Caco-2 (cell line): ENCODE measurements at regions of chr20 and their contacts with region 1.

Region 1: DNA sequence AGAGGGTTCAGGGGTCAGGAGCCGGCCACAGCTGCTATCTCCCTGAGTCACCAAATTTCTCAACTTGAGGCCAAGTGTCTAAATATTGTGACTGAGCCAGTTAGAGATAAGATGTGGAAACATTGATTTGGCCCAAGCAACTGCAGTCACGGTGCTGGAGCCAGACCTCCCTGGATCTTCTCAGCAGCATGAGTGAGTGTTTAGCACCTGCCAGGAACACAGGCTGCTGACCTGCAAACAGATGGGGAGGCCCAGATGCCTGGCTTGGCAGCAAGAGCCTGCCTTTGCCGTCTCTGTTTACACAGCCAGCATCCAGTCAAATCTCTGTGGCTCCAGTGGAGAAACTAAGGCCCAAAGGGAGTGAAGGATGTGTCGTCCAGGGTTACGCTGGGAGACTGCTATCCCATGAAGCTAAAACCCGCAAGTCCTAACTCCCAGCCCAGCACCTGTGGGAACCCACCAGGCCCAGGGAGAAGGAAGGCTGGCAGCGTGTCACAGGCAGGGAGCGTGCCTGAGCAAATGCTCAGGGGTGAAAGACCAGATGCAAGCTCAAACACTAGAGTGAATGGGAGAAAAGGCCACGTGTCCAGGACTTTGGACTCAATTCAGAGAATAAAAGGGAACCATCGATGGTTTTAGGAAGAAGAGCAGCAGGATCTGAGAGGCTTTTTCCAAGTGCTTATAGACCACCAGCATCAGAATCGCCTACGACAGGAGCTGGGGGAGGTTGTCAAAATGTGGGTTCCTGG is 15.9 kb upstream of the PTGIS start:
- DNase-seq: peak; percentile 97 to 99
- H3K4me3 ChIP-seq: no peak overlapping the region
- H3K4me3 Mint-ChIP-seq: peak overlapping the region; percentile 66
- H3K27ac Mint-ChIP-seq: peak overlapping the region; percentile 93
- H3K4me1 ChIP-seq: peaks cover 51% of the 10 kb centered on the region
- H3K4me1 Mint-ChIP-seq: peaks cover 29% of the 10 kb centered on the region
- H3K27me3 ChIP-seq: no peaks in the 10 kb centered on the region
- H3K27me3 Mint-ChIP-seq: no peaks in the 10 kb centered on the region
- CTCF ChIP-seq: peak; percentile 42 to 77

Region 2: DNA sequence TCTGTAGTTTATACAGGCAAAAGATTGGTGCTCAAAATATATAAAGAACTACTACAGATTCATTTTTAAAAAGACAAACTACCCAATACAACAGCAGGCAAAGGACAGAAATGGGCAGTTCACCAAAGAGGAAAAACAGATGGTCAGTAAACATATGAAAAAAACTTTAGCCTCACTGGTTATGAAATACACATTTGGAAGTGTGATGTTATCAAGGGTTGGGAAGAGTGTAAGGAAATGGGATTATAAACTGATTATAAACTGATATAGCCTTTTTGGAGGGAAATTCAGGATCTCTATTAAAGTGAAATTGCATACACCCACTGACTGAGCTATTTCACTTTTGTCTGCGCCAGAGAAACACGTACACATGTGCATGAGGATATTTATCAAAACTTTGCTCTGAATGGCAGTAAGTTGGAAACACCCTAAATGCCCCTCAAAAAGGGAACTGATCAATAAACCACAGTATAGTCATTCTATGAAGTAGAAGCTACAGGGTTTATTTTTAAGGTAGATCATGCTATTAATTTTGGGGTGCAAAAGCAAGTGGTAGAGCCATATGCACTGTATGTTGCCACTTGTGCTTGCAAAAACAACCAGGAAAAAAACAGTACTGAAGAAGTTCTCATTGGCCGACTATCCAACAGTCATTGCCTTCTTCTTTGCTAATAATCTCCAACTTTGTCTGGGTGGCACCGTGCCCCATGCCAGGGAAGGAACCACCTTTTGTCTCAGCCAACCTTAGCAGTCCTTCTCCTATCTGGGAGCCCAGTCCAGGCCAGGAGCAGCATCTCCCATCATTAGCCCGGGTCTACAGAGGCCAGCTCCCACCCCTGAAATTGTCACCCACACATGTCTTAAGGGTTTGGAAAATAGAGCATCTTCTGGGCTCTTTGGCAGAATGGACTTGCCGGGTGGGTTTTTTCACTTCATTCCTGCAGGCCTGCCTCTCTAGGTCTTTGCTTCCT is 694.4 kb before region 1 on chr20:
- CTCF ChIA-PET with region 1: no interaction called
- POLR2A ChIA-PET with region 1: no interaction called
- intact Hi-C with region 1: no loop called
- DNase-seq: no peak
- H3K4me3 ChIP-seq: no peak overlapping the region
- H3K4me3 Mint-ChIP-seq: no peak overlapping the region
- H3K27ac Mint-ChIP-seq: no peak overlapping the region
- H3K4me1 ChIP-seq: no peaks in the 10 kb centered on the region
- H3K4me1 Mint-ChIP-seq: no peaks in the 10 kb centered on the region
- H3K27me3 ChIP-seq: 0 out of 2 replicates have a peak, but pooled peaks cover 1% of the 10 kb centered on the region
- H3K27me3 Mint-ChIP-seq: peaks cover 15% of the 10 kb centered on the region
- CTCF ChIP-seq: no peak

Region 3: GRCh38 chr20:49541733-49542513 is 41.9 kb before region 1 on chr20:
- CTCF ChIA-PET with region 1: interaction called, 46 read pairs
- POLR2A ChIA-PET with region 1: no interaction called
- intact Hi-C with region 1: loop called (anchors 1 kb)
- DNase-seq: peak; percentile 88 to 89
- H3K4me3 ChIP-seq: no peak overlapping the region
- H3K4me3 Mint-ChIP-seq: no peak overlapping the region
- H3K27ac Mint-ChIP-seq: no peak overlapping the region
- H3K4me1 ChIP-seq: peaks cover 5% of the 10 kb centered on the region; the same call in 1 of the 2 replicates
- H3K4me1 Mint-ChIP-seq: peaks cover 11% of the 10 kb centered on the region
- H3K27me3 ChIP-seq: no peaks in the 10 kb centered on the region
- H3K27me3 Mint-ChIP-seq: no peaks in the 10 kb centered on the region
- CTCF ChIP-seq: peak; percentile 96 to 99

Region 4: GRCh38 chr20:49549811-49550551 is 33.9 kb before region 1 on chr20:
- CTCF ChIA-PET with region 1: interaction called, 17 read pairs
- POLR2A ChIA-PET with region 1: interaction called, 9 read pairs
- intact Hi-C with region 1: loop called (anchors 1 kb)
- DNase-seq: peak in 1 of 2 experiments; percentile 32
- H3K4me3 ChIP-seq: no peak overlapping the region
- H3K4me3 Mint-ChIP-seq: no peak overlapping the region
- H3K27ac Mint-ChIP-seq: no peak overlapping the region
- H3K4me1 ChIP-seq: peaks cover 34% of the 10 kb centered on the region
- H3K4me1 Mint-ChIP-seq: peaks cover 16% of the 10 kb centered on the region
- H3K27me3 ChIP-seq: no peaks in the 10 kb centered on the region
- H3K27me3 Mint-ChIP-seq: no peaks in the 10 kb centered on the region
- CTCF ChIP-seq: no peak

Region 5: DNA sequence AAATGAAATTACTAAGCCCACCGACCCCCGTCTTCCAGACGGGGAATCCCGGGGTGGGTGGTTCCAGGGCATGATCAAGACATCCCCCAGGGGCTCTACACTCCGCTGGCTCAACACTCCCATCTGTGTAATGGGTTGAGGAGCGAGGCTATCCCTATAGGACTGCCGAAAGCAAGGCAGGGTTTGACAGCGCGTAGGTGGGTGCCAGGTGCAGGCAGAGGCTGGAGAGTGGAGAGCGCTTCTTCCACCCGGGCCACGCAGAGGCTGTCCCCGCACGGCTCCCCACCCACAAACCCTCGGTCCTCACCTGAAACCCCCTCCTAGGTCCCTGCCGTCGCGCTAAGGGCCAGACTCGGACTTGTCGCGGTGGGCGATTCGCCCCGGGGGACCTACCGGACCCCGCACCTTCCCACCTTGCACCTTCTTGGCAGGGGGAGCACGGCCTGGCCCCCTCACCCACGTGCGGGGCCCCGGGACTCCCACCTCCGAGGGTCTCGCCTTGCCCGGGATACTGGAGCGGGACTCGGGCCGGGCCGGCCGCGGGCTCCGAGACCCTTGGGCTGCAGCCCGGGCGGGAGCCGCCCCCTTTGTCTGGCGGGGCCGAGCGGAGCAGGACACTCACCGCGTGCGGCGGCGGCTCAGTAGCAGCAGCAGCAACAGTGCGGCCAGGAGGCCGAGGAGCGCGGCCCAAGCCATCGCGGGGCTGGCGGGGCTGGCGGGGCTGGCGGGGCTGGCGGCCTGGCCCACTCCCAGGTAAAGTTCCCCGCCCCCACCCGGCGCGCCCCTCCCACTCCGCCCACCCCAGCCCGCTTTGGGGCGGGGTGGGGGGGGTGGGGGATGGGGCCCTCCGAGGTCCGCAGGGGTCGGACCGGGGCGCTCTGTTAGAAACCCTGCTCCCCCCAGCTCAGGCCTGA is 16.2 kb before region 1 on chr20 and contains the start of gene PTGIS:
- CTCF ChIA-PET with region 1: interaction called, 8 read pairs
- POLR2A ChIA-PET with region 1: interaction called, 4 read pairs
- intact Hi-C with region 1: loop called (anchors 1 kb)
- DNase-seq: peak; percentile 40
- H3K4me3 ChIP-seq: peak within 1 kb of the TSS; percentile 29
- H3K4me3 Mint-ChIP-seq: peak within 1 kb of the TSS; percentile 7
- H3K27ac Mint-ChIP-seq: no peak within 1 kb of the TSS
- H3K4me1 ChIP-seq: peaks cover 9% of the 10 kb centered on the region
- H3K4me1 Mint-ChIP-seq: peaks cover 24% of the 10 kb centered on the region
- H3K27me3 ChIP-seq: no peaks in the 10 kb centered on the region
- H3K27me3 Mint-ChIP-seq: no peaks in the 10 kb centered on the region
- CTCF ChIP-seq: no peak
- total RNA-seq, gene PTGIS: 1.9 and 2.7 TPM in 2 replicates

Region 6: GRCh38 chr20:49594143-49594930 is 10.5 kb after region 1 on chr20:
- CTCF ChIA-PET with region 1: interaction called, 13 read pairs
- POLR2A ChIA-PET with region 1: interaction called, 7 read pairs
- intact Hi-C with region 1: no loop called
- DNase-seq: peak in 1 of 2 experiments; percentile 55
- H3K4me3 ChIP-seq: no peak overlapping the region
- H3K4me3 Mint-ChIP-seq: no peak overlapping the region
- H3K27ac Mint-ChIP-seq: peak overlapping the region; percentile 16
- H3K4me1 ChIP-seq: peaks cover 28% of the 10 kb centered on the region
- H3K4me1 Mint-ChIP-seq: peaks cover 31% of the 10 kb centered on the region
- H3K27me3 ChIP-seq: no peaks in the 10 kb centered on the region
- H3K27me3 Mint-ChIP-seq: no peaks in the 10 kb centered on the region
- CTCF ChIP-seq: no peak

Region 7: DNA sequence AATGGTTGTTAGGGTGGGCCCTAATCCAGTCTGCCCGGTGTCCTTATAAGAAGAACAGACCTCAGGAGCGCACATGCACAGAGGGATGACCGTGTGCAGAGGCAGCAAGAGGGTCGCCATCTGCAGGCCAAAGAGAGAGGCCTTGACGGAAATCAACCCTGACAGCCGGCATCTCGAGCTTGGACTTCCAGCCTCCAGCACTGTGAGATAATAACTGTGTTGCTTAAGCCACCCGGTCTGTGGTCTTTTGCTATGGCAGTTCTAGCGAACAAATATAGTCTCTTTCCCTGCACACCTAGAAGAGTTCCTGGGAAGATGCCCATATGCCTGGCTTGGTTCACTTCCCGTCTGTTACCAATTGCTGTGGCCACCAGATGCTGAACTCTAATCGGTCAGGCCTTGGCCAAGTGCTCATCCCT is 19.4 kb after region 1 on chr20:
- CTCF ChIA-PET with region 1: interaction called, 57 read pairs
- POLR2A ChIA-PET with region 1: interaction called, 17 read pairs
- intact Hi-C with region 1: loop called (anchors 1 kb)
- DNase-seq: peak; percentile 81 to 88
- H3K4me3 ChIP-seq: no peak overlapping the region
- H3K4me3 Mint-ChIP-seq: no peak overlapping the region
- H3K27ac Mint-ChIP-seq: no peak overlapping the region
- H3K4me1 ChIP-seq: peaks cover 21% of the 10 kb centered on the region
- H3K4me1 Mint-ChIP-seq: peaks cover 28% of the 10 kb centered on the region
- H3K27me3 ChIP-seq: no peaks in the 10 kb centered on the region
- H3K27me3 Mint-ChIP-seq: no peaks in the 10 kb centered on the region
- CTCF ChIP-seq: peak; percentile 78 to 83

Region 8: GRCh38 chr20:49620364-49621240 is 36.8 kb after region 1 on chr20:
- CTCF ChIA-PET with region 1: no interaction called
- POLR2A ChIA-PET with region 1: no interaction called
- intact Hi-C with region 1: no loop called
- DNase-seq: no peak
- H3K4me3 ChIP-seq: no peak overlapping the region
- H3K4me3 Mint-ChIP-seq: no peak overlapping the region
- H3K27ac Mint-ChIP-seq: no peak overlapping the region
- H3K4me1 ChIP-seq: peaks cover 9% of the 10 kb centered on the region
- H3K4me1 Mint-ChIP-seq: peaks cover 2% of the 10 kb centered on the region
- H3K27me3 ChIP-seq: no peaks in the 10 kb centered on the region
- H3K27me3 Mint-ChIP-seq: peaks cover 2% of the 10 kb centered on the region
- CTCF ChIP-seq: no peak

Region 9: GRCh38 chr20:49633643-49634042 is 49.8 kb after region 1 on chr20:
- CTCF ChIA-PET with region 1: no interaction called
- POLR2A ChIA-PET with region 1: no interaction called
- intact Hi-C with region 1: no loop called
- DNase-seq: no peak
- H3K4me3 ChIP-seq: no peak overlapping the region
- H3K4me3 Mint-ChIP-seq: no peak overlapping the region
- H3K27ac Mint-ChIP-seq: no peak overlapping the region
- H3K4me1 ChIP-seq: no peaks in the 10 kb centered on the region
- H3K4me1 Mint-ChIP-seq: peaks cover 8% of the 10 kb centered on the region
- H3K27me3 ChIP-seq: no peaks in the 10 kb centered on the region
- H3K27me3 Mint-ChIP-seq: no peaks in the 10 kb centered on the region
- CTCF ChIP-seq: no peak

Region 10: DNA sequence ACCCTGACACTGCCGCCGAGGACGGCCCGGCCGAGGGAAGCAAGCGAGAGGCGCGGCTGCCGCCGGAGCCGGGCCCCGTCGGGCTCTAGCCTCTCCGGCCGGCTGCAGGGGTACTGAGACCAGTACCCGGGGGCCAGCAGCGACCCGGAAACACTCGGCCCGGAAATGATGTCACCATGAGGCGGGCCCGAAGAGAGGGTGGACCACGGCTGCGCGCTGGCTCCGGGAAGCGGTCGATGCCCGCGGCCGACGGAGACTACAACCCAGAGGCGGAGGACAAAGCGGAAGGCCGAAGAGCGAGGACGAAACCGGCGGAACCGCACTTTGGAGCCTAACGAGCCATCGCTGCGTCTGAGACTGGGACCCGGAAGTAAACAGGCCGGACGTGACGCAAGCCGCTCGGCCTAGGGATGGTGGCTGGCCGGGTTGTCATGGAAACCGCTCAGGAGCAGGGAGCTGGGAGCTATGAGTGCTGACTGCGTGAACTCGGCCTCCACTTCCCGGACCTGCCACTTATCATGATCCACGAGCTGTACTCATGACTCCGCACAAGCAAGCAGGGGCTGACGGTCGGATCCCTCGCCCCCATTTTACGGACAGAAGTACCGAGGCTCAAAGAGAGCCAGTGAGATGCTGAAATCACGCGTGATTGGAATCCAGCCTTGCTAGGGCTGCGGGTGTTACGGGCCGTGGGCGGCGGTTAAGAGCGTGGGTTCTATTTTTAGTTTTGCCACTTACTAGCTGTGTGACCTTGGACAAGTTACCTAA is 331.7 kb after region 1 on chr20 and contains the start of gene SPATA2:
- CTCF ChIA-PET with region 1: interaction called, 6 read pairs
- POLR2A ChIA-PET with region 1: interaction called, 26 read pairs
- intact Hi-C with region 1: no loop called
- DNase-seq: peak; percentile 100
- H3K4me3 ChIP-seq: peak within 1 kb of the TSS; percentile 80
- H3K4me3 Mint-ChIP-seq: peak within 1 kb of the TSS; percentile 99
- H3K27ac Mint-ChIP-seq: peak within 1 kb of the TSS; percentile 100
- H3K4me1 ChIP-seq: peaks cover 20% of the 10 kb centered on the region
- H3K4me1 Mint-ChIP-seq: peaks cover 25% of the 10 kb centered on the region
- H3K27me3 ChIP-seq: no peaks in the 10 kb centered on the region
- H3K27me3 Mint-ChIP-seq: no peaks in the 10 kb centered on the region
- CTCF ChIP-seq: no peak
- total RNA-seq, gene SPATA2: 29.0 TPM in 2 replicates